PC-3 (cell line): ENCODE measurements at regions of chr11 and their contacts with region 1.

Region 1: GRCh38 chr11:10808553-10809372 is at the start of gene EIF4G2:
- DNase-seq: peak; percentile 97
- ATAC-seq: peak; percentile 89
- H3K4me3 ChIP-seq: peak within 1 kb of the TSS; percentile 92
- H3K27ac ChIP-seq: peak within 1 kb of the TSS; percentile 95
- H3K4me1 ChIP-seq: peaks cover 41% of the 10 kb centered on the region
- H3K27me3 ChIP-seq: no peaks in the 10 kb centered on the region
- CTCF ChIP-seq: no peak
- total RNA-seq, gene EIF4G2: 999 and 1,007 TPM in 2 replicates

Region 2: DNA sequence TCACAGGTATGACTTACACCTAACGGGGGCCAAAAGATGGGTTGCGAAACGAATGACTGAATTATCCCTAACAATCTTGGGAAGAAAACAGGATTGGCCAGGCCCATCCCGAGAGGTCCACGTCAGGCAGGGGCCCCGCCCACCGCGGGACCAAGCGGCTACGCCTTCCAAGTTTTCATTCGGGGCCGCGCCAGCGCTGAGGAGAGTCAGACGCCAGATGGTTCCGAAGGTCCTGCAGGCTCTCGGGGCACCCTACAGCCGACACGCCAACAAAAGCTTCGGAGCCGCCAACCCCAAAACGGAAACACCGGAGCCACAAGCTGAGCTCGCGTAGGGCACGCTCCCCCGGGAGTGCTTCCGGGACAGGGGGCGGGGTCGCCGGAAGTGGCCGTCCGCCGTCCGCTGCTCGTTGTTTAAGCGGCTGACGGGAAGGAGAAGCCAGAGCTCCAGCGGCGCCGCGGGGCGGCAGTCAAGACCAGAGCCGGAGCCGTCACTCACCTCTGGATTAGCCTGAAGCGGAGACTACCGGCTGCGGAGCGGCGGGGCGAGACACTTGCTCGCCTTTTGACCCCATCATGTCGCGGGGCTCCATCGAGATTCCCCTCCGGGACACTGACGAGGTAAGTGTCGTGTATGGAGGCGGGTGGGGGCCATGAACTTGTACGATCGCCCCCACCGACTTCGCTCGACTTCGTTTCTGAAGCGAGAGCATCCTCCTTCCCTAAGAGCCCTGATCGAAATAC is 57.8 kb before region 1 on chr11 and contains the start of gene CTR9:
- CTCF ChIA-PET with region 1: no interaction called
- POLR2A ChIA-PET with region 1: no interaction called
- intact Hi-C with region 1: no loop called
- DNase-seq: peak; percentile 87
- ATAC-seq: peak; percentile 92
- H3K4me3 ChIP-seq: peak within 1 kb of the TSS; percentile 98
- H3K27ac ChIP-seq: peak within 1 kb of the TSS; percentile 97
- H3K4me1 ChIP-seq: peaks cover 16% of the 10 kb centered on the region
- H3K27me3 ChIP-seq: no peaks in the 10 kb centered on the region
- CTCF ChIP-seq: peak; percentile 22; the same call in 1 of the 2 replicates
- total RNA-seq, gene CTR9: 20.0 and 21.9 TPM in 2 replicates

Region 3: GRCh38 chr11:10847960-10848870 is 39.5 kb after region 1 on chr11:
- CTCF ChIA-PET with region 1: no interaction called
- POLR2A ChIA-PET with region 1: interaction called, 11 read pairs
- intact Hi-C with region 1: no loop called
- DNase-seq: no peak
- ATAC-seq: no peak
- H3K4me3 ChIP-seq: no peak overlapping the region
- H3K27ac ChIP-seq: no peak overlapping the region
- H3K4me1 ChIP-seq: peaks cover under 1% of the 10 kb centered on the region
- H3K27me3 ChIP-seq: no peaks in the 10 kb centered on the region
- CTCF ChIP-seq: no peak

Region 4: GRCh38 chr11:10857709-10858438 is 49.1 kb after region 1 on chr11 and contains the start of gene ZBED5:
- CTCF ChIA-PET with region 1: interaction called, 3 read pairs
- POLR2A ChIA-PET with region 1: interaction called, 26 read pairs
- intact Hi-C with region 1: loop called (anchors 1 kb)
- DNase-seq: peak; percentile 97
- ATAC-seq: peak; percentile 93
- H3K4me3 ChIP-seq: peak within 1 kb of the TSS; percentile 76
- H3K27ac ChIP-seq: peak within 1 kb of the TSS; percentile 91
- H3K4me1 ChIP-seq: peaks cover 38% of the 10 kb centered on the region
- H3K27me3 ChIP-seq: no peaks in the 10 kb centered on the region
- CTCF ChIP-seq: no peak; the same call in 1 of the 2 replicates
- total RNA-seq, gene ZBED5: 19.5 and 21.0 TPM in 2 replicates

Region 5: GRCh38 chr11:10875430-10876021 is 66.8 kb after region 1 on chr11:
- CTCF ChIA-PET with region 1: no interaction called
- POLR2A ChIA-PET with region 1: interaction called, 11 read pairs
- intact Hi-C with region 1: no loop called
- DNase-seq: peak; percentile 81
- ATAC-seq: peak; percentile 74
- H3K4me3 ChIP-seq: peak overlapping the region; percentile 51; the same call in 1 of the 2 replicates
- H3K27ac ChIP-seq: peak overlapping the region; percentile 98
- H3K4me1 ChIP-seq: peaks cover 42% of the 10 kb centered on the region
- H3K27me3 ChIP-seq: no peaks in the 10 kb centered on the region
- CTCF ChIP-seq: no peak

Region 6: GRCh38 chr11:10899121-10899830 is 90.5 kb after region 1 on chr11:
- CTCF ChIA-PET with region 1: interaction called, 7 read pairs
- POLR2A ChIA-PET with region 1: interaction called, 16 read pairs
- intact Hi-C with region 1: loop called (anchors 1 kb)
- DNase-seq: no peak
- ATAC-seq: peak; percentile 20; the same call in 1 of the 2 replicates
- H3K4me3 ChIP-seq: peak overlapping the region; percentile 18
- H3K27ac ChIP-seq: peak overlapping the region; percentile 99
- H3K4me1 ChIP-seq: peaks cover 45% of the 10 kb centered on the region
- H3K27me3 ChIP-seq: no peaks in the 10 kb centered on the region
- CTCF ChIP-seq: no peak

Region 7: DNA sequence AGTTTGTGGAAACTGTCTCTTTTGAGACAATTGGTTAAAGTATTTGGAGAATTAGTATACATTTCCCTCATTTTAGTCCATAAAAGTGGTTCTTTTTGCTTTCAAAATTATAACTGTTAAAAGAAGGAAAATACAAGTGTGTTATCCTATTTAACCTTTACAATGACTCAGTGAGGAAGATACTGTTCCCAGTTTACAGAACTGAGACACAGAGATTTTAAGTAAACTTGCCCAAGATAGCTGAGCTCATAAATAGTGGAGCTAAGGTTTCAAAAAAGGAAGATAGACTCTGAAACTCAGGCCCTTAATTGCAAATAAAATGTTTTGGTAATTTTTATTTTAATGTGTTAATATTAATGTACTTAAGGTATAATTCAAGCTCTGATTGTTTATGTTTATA is 1140.7 kb after region 1 on chr11:
- CTCF ChIA-PET with region 1: no interaction called
- POLR2A ChIA-PET with region 1: interaction called, 32 read pairs
- intact Hi-C with region 1: no loop called
- DNase-seq: no peak
- ATAC-seq: peak; percentile 55; the same call in 1 of the 2 replicates
- H3K4me3 ChIP-seq: no peak overlapping the region
- H3K27ac ChIP-seq: no peak overlapping the region
- H3K4me1 ChIP-seq: peaks cover 42% of the 10 kb centered on the region
- H3K27me3 ChIP-seq: no peaks in the 10 kb centered on the region
- CTCF ChIP-seq: no peak